K562 (cell line): ENCODE measurements at regions of chr10 and their contacts with region 1.

Region 1: GRCh38 chr10:22010973-22011408 is 7.5 kb upstream of the DNAJC1 start:
- DNase-seq: no peak
- ATAC-seq: no peak
- H3K4me3 ChIP-seq: no peak overlapping the region
- H3K27ac ChIP-seq: no peak overlapping the region
- H3K4me1 ChIP-seq: peaks cover 0 to 12% of the 10 kb centered on the region in 2 experiments; a peak in 4 of 5 replicates
- H3K27me3 ChIP-seq: no peaks in the 10 kb centered on the region
- CTCF ChIP-seq: peak in 2 of 3 experiments; percentile 8 to 42; a peak in 4 of 6 replicates
- EP300 ChIP-seq: no peak
- POLR2A ChIP-seq: no peak
- RAD21 ChIP-seq: peak; percentile 39 to 47

Region 2: DNA sequence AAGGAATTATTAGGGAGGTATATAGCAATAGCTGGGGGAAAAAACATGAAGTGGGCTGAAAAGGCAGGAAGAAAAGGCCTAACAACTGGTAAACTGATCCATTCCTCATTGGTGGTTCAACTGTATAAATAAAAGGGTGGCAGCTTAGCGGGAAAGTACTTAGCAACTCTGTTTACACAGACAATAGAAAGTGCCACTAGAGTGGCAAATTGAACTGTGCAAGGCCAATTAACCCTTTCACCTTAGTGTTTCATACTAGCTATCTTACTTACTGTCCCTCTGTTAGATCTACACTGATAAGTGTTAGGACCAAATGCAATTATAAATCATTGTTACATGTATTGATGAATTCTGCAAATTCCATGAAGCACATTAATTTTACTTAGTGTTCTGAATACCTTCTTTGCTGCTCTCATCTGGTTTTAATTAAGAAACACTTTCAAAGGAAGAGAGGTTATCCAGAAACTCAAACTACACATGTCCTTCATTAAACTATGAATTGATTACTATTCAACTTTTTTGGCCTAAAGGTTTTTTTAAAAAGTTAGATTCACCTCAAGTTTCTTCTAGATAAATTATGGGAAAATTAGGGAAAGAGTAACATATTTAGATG is 35.5 kb before region 1 on chr10:
- CTCF ChIA-PET with region 1: no interaction called
- POLR2A ChIA-PET with region 1: no interaction called
- in situ Hi-C with region 1: no loop called
- intact Hi-C with region 1: no loop called
- DNase-seq: no peak
- ATAC-seq: no peak
- H3K4me3 ChIP-seq: no peak overlapping the region
- H3K27ac ChIP-seq: no peak overlapping the region
- H3K4me1 ChIP-seq: peaks cover 0 to 10% of the 10 kb centered on the region in 2 experiments; a peak in 1 of 5 replicates
- H3K27me3 ChIP-seq: no peaks in the 10 kb centered on the region
- CTCF ChIP-seq: no peak
- EP300 ChIP-seq: no peak
- POLR2A ChIP-seq: no peak
- RAD21 ChIP-seq: no peak

Region 3: GRCh38 chr10:22183771-22184461 is 172.9 kb after region 1 on chr10:
- CTCF ChIA-PET with region 1: no interaction called
- POLR2A ChIA-PET with region 1: no interaction called
- in situ Hi-C with region 1: no loop called
- intact Hi-C with region 1: loop called (anchors 10 kb)
- DNase-seq: no peak
- ATAC-seq: no peak
- H3K4me3 ChIP-seq: no peak overlapping the region
- H3K27ac ChIP-seq: no peak overlapping the region
- H3K4me1 ChIP-seq: no peaks in the 10 kb centered on the region; a peak in 1 of 5 replicates
- H3K27me3 ChIP-seq: no peaks in the 10 kb centered on the region; a peak in 1 of 5 replicates
- CTCF ChIP-seq: no peak
- EP300 ChIP-seq: no peak
- POLR2A ChIP-seq: no peak
- RAD21 ChIP-seq: no peak

Region 4: GRCh38 chr10:22427890-22428571 is 417.0 kb after region 1 on chr10:
- CTCF ChIA-PET with region 1: no interaction called
- POLR2A ChIA-PET with region 1: no interaction called
- in situ Hi-C with region 1: no loop called
- intact Hi-C with region 1: loop called (anchors 10 kb)
- DNase-seq: peak in 2 of 4 experiments; percentile 17 to 21
- ATAC-seq: 0 out of 3 replicates have a peak, but pooled peaks have one; percentile 7
- H3K4me3 ChIP-seq: no peak overlapping the region
- H3K27ac ChIP-seq: no peak overlapping the region; the same call in 2 of the 3 replicates
- H3K4me1 ChIP-seq: peaks cover 9 to 41% of the 10 kb centered on the region in 2 experiments
- H3K27me3 ChIP-seq: no peaks in the 10 kb centered on the region
- CTCF ChIP-seq: no peak
- EP300 ChIP-seq: no peak
- POLR2A ChIP-seq: no peak
- RAD21 ChIP-seq: no peak